ENCODE measurements at regions of chr3 and their contacts with region 1.

Region 1: GRCh38 chr3:64685800-64686445 is 1.9 kb downstream of the ADAMTS9 start:
- DNase-seq: peak; percentile 99
- H3K4me3 ChIP-seq: peak overlapping the region; percentile 74 to 87 (median 78)
- H3K27ac ChIP-seq: peak overlapping the region; percentile 97 to 99 (median 98)
- H3K4me1 ChIP-seq: peaks cover 0 to 36% (median 20%) of the 10 kb centered on the region in 4 donors
- H3K27me3 ChIP-seq: no peaks in the 10 kb centered on the region
- CTCF ChIP-seq: peak in 3 of 4 experiments; percentile 18 to 31 (median 22)
- EP300 ChIP-seq: peak; percentile 40 to 94 (median 68)
- POLR2A ChIP-seq: peak; percentile 90 to 91

Region 2: GRCh38 chr3:64612082-64612860 is 73.7 kb before region 1 on chr3:
- intact Hi-C with region 1: loop called (anchors 1 kb)
- DNase-seq: peak; percentile 86
- H3K4me3 ChIP-seq: peak overlapping the region in 1 of 4 donors; percentile 27
- H3K27ac ChIP-seq: peak overlapping the region; percentile 85 to 94 (median 87)
- H3K4me1 ChIP-seq: peaks cover 0 to 33% (median 23%) of the 10 kb centered on the region in 4 donors
- H3K27me3 ChIP-seq: no peaks in the 10 kb centered on the region
- CTCF ChIP-seq: no peak
- EP300 ChIP-seq: peak; percentile 86 to 97 (median 92)
- POLR2A ChIP-seq: no peak

Region 3: GRCh38 chr3:64739971-64740631 is 54.2 kb after region 1 on chr3:
- intact Hi-C with region 1: loop called (anchors 5 kb)
- DNase-seq: no peak
- H3K4me3 ChIP-seq: no peak overlapping the region
- H3K27ac ChIP-seq: peak overlapping the region; percentile 35 to 70 (median 64)
- H3K4me1 ChIP-seq: peaks cover 0 to 56% (median 29%) of the 10 kb centered on the region in 4 donors
- H3K27me3 ChIP-seq: no peaks in the 10 kb centered on the region
- CTCF ChIP-seq: no peak
- EP300 ChIP-seq: peak in 1 of 4 donors; percentile 18
- POLR2A ChIP-seq: no peak

Region 4: DNA sequence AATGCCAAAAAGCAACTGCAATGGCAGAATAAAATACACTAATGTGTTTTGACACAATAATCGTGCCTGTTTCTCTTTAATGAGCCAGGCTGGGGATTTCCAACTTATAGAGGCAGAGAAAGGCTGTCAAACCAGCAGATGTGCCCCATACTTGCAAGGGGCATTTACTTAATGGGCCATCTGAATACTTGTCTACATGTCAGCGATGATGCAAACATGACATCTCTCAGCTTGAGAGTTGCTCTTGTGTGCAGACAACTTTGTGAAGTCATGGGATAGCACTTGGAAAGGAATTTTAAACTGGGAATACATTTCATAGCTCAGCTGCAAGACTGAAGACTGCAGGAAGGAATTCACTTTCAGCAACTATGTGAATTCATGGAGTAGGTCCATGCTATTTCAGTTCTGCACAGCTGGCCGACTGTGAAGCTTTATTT is 129.3 kb after region 1 on chr3:
- intact Hi-C with region 1: loop called (anchors 2 kb)
- DNase-seq: no peak
- H3K4me3 ChIP-seq: no peak overlapping the region
- H3K27ac ChIP-seq: peak overlapping the region; percentile 45 to 80 (median 62)
- H3K4me1 ChIP-seq: peaks cover 0 to 33% (median 25%) of the 10 kb centered on the region in 4 donors
- H3K27me3 ChIP-seq: no peaks in the 10 kb centered on the region
- CTCF ChIP-seq: peak in 1 of 4 experiments; percentile 29
- EP300 ChIP-seq: no peak
- POLR2A ChIP-seq: no peak

Region 5: DNA sequence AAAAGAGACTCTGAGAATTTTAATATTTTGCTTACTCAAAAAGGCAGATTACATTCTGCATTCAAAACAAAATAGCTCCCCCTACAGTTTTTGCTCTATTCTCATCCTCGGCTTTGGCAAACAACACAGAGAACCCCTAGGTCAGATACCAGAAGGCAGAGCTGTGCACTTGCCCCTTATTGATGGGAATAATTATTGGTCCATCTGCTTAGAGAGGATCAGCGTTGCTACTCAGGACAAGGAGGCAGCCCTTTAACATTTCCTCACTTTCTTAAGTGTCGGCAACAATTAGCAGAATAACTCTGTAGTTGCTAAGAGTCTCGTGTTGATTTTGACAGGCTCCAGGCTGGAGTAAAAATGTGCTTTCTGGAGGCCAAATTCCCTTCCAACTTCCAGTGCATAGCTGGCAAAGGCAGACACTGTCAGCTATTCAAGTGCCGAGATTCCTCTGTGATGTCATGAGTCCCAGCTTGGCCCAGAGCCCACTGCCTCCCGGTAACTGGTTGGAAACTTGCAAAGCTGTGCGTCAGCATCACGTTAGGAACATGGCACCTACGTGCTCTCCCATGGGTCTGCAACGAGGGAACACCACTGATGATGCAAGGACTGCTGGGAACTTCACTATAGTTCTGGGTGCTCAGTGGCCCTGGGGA is 484.6 kb after region 1 on chr3:
- intact Hi-C with region 1: loop called (anchors 5 kb)
- DNase-seq: peak; percentile 98
- H3K4me3 ChIP-seq: no peak overlapping the region
- H3K27ac ChIP-seq: peak overlapping the region; percentile 62 to 82 (median 66)
- H3K4me1 ChIP-seq: peaks cover 0 to 24% (median 21%) of the 10 kb centered on the region in 4 donors
- H3K27me3 ChIP-seq: no peaks in the 10 kb centered on the region
- CTCF ChIP-seq: peak in 3 of 4 experiments; percentile 7 to 42 (median 29)
- EP300 ChIP-seq: peak; percentile 100
- POLR2A ChIP-seq: no peak

Region 6: DNA sequence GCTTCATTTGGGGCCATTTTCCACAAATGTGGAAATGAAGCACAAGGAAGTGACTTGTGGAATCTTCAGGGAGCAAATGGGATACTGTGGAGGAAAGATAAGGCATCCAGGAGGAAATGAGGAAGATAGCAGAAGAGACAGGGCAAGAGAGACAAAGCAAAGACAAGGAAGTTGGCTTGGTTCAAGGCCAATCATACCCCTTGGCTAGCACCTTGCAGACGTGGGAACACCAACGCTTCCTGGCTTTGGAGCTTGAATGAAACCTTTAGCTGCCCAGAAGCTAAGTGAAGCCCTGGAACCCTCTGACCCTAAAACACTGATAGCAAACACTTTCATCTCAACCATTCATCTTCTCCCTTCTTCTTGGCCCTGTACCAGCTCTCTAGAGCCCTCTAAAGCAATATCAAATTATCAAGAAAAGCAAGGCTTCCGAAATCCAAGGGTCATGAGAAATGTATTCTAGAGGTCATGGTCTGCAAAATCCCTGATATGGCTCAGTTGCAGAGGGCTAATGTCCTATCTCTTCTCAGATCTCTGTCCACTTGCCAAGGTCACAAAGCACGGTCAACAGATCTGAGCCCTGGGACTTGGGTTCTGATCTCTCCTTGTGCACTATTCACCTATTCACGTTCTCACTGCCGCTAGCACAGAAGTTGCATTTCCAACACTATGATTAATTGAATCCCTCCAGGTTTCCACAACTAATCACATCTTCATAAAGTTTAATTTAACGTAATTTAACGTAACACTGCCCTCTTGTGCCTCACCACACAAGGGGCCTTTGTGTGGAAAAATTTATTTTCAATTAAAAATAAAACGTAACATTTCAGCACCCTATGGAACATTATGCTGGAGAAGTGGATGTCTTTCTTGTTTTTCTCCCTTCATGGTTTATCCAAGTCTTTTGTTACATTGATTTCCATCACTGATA is 559.5 kb after region 1 on chr3:
- intact Hi-C with region 1: loop called (anchors 5 kb)
- DNase-seq: no peak
- H3K4me3 ChIP-seq: no peak overlapping the region
- H3K27ac ChIP-seq: no peak overlapping the region
- H3K4me1 ChIP-seq: peaks cover 0 to 9% (median 7%) of the 10 kb centered on the region in 4 donors
- H3K27me3 ChIP-seq: no peaks in the 10 kb centered on the region
- CTCF ChIP-seq: peak in 3 of 4 experiments; percentile 27 to 51 (median 43)
- EP300 ChIP-seq: no peak
- POLR2A ChIP-seq: no peak

Region 7: GRCh38 chr3:65412588-65412987 is 726.7 kb after region 1 on chr3:
- intact Hi-C with region 1: loop called (anchors 5 kb)
- DNase-seq: peak; percentile 90
- H3K4me3 ChIP-seq: no peak overlapping the region
- H3K27ac ChIP-seq: peak overlapping the region in 3 of 4 donors; percentile 68 to 80 (median 74)
- H3K4me1 ChIP-seq: peaks cover 0 to 71% (median 52%) of the 10 kb centered on the region in 4 donors
- H3K27me3 ChIP-seq: no peaks in the 10 kb centered on the region
- CTCF ChIP-seq: peak; percentile 17 to 57 (median 41)
- EP300 ChIP-seq: peak in 2 of 4 donors; percentile 37 to 59
- POLR2A ChIP-seq: no peak